Mammary epithelial cell (primary cell): ENCODE measurements at regions of chr10 and their contacts with region 1.

Region 1: DNA sequence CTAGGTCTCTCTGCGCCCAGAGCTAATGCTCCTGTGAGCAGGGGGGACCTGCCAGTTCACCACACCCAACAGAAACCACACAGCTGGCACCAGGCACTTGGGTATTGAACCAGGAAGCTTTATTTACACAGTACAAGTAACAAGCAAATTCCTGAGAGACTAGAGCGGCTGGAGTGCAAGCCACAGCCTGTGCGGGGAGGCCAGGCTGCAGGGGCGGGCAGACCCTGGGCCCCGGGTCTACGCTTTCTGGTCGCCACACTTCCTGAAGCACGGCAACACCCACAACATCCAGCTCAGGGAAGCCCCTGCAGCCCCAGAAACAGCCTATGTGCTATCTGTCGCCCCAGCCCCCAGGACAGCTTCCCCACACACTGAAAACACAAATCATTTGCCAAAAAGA is 125.0 kb downstream of the FAM53B start:
- DNase-seq: peak; percentile 61
- H3K4me3 ChIP-seq: peak overlapping the region in 1 of 3 experiments; percentile 17
- H3K27ac ChIP-seq: peak overlapping the region; percentile 48
- H3K4me1 ChIP-seq: peaks cover 27% of the 10 kb centered on the region
- H3K27me3 ChIP-seq: no peaks in the 10 kb centered on the region
- CTCF ChIP-seq: no peak

Region 2: DNA sequence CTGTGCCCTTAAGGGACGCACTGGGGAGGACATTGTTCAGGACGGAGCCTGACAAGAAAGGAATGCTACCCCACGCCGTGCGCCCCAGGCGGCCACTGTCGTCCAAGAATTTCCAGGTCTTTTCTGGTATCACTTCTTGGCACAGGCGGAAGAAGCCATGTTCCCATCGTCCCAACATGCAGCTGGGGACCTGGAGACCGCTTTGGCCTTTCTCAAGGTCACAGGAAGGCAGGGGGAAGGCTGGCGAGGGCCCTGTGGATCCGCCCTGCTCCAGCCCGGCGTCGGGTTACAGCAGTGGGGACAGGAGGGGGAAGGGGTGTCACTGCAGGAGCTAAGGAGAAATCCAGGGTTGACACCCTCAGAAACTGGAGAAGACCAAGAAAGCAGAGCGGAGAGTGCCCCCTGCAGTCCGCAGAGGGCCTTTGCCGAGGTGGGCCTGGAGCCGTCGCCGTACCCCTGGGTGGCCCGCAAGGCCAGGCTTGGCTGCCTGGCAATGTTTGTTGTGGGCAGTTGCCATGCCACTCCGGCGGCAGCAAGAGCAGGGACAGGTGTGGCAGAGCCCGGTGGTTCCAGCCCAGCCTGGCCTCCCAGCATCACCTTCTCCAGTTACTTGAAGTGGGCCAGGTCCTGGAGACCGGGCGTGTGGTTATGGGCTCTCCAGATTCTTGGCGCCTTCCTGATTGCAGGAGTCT is 53.5 kb before region 1 on chr10:
- CTCF ChIA-PET with region 1: no interaction called
- dilution Hi-C with region 1: loop called (anchors 5 kb)
- in situ Hi-C with region 1: no loop called
- intact Hi-C with region 1: no loop called
- DNase-seq: no peak
- H3K4me3 ChIP-seq: no peak overlapping the region
- H3K27ac ChIP-seq: no peak overlapping the region
- H3K4me1 ChIP-seq: peaks cover 3% of the 10 kb centered on the region
- H3K27me3 ChIP-seq: no peaks in the 10 kb centered on the region
- CTCF ChIP-seq: peak; percentile 31 to 35

Region 3: GRCh38 chr10:124660404-124661125 is 41.4 kb after region 1 on chr10:
- CTCF ChIA-PET with region 1: no interaction called
- dilution Hi-C with region 1: loop called (anchors 5 kb)
- in situ Hi-C with region 1: no loop called
- intact Hi-C with region 1: no loop called
- DNase-seq: no peak
- H3K4me3 ChIP-seq: no peak overlapping the region
- H3K27ac ChIP-seq: no peak overlapping the region
- H3K4me1 ChIP-seq: no peaks in the 10 kb centered on the region
- H3K27me3 ChIP-seq: no peaks in the 10 kb centered on the region
- CTCF ChIP-seq: no peak

Region 4: GRCh38 chr10:124697830-124698544 is 78.8 kb after region 1 on chr10:
- CTCF ChIA-PET with region 1: no interaction called
- dilution Hi-C with region 1: loop called (anchors 5 kb)
- in situ Hi-C with region 1: no loop called
- intact Hi-C with region 1: no loop called
- DNase-seq: no peak
- H3K4me3 ChIP-seq: no peak overlapping the region
- H3K27ac ChIP-seq: no peak overlapping the region
- H3K4me1 ChIP-seq: no peaks in the 10 kb centered on the region
- H3K27me3 ChIP-seq: no peaks in the 10 kb centered on the region
- CTCF ChIP-seq: no peak

Region 5: GRCh38 chr10:125048101-125048864 is 429.1 kb after region 1 on chr10:
- CTCF ChIA-PET with region 1: no interaction called
- dilution Hi-C with region 1: no loop called
- in situ Hi-C with region 1: no loop called
- intact Hi-C with region 1: no loop called
- DNase-seq: peak; percentile 74
- H3K4me3 ChIP-seq: no peak overlapping the region
- H3K27ac ChIP-seq: peak overlapping the region; percentile 45
- H3K4me1 ChIP-seq: peaks cover 34% of the 10 kb centered on the region
- H3K27me3 ChIP-seq: no peaks in the 10 kb centered on the region
- CTCF ChIP-seq: peak; percentile 96